Caco-2 (cell line): ENCODE measurements at regions of chr13 and their contacts with region 1.

Region 1: GRCh38 chr13:19888799-19889198 is 25.4 kb upstream of the ZMYM5 start:
- DNase-seq: no peak
- H3K4me3 ChIP-seq: no peak overlapping the region
- H3K4me3 Mint-ChIP-seq: no peak overlapping the region
- H3K27ac Mint-ChIP-seq: no peak overlapping the region
- H3K4me1 ChIP-seq: no peaks in the 10 kb centered on the region
- H3K4me1 Mint-ChIP-seq: no peaks in the 10 kb centered on the region
- H3K27me3 ChIP-seq: no peaks in the 10 kb centered on the region
- H3K27me3 Mint-ChIP-seq: no peaks in the 10 kb centered on the region
- CTCF ChIP-seq: peak in 1 of 2 experiments; percentile 6

Region 2: GRCh38 chr13:19673473-19674430 is 215.0 kb before region 1 on chr13:
- CTCF ChIA-PET with region 1: no interaction called
- POLR2A ChIA-PET with region 1: no interaction called
- intact Hi-C with region 1: loop called (anchors 5 kb)
- DNase-seq: no peak
- H3K4me3 ChIP-seq: no peak overlapping the region
- H3K4me3 Mint-ChIP-seq: no peak overlapping the region
- H3K27ac Mint-ChIP-seq: no peak overlapping the region
- H3K4me1 ChIP-seq: no peaks in the 10 kb centered on the region
- H3K4me1 Mint-ChIP-seq: no peaks in the 10 kb centered on the region
- H3K27me3 ChIP-seq: no peaks in the 10 kb centered on the region
- H3K27me3 Mint-ChIP-seq: no peaks in the 10 kb centered on the region
- CTCF ChIP-seq: no peak